IMR-90 (cell line): ENCODE measurements at regions of chr17 and their contacts with region 1.

Region 1: DNA sequence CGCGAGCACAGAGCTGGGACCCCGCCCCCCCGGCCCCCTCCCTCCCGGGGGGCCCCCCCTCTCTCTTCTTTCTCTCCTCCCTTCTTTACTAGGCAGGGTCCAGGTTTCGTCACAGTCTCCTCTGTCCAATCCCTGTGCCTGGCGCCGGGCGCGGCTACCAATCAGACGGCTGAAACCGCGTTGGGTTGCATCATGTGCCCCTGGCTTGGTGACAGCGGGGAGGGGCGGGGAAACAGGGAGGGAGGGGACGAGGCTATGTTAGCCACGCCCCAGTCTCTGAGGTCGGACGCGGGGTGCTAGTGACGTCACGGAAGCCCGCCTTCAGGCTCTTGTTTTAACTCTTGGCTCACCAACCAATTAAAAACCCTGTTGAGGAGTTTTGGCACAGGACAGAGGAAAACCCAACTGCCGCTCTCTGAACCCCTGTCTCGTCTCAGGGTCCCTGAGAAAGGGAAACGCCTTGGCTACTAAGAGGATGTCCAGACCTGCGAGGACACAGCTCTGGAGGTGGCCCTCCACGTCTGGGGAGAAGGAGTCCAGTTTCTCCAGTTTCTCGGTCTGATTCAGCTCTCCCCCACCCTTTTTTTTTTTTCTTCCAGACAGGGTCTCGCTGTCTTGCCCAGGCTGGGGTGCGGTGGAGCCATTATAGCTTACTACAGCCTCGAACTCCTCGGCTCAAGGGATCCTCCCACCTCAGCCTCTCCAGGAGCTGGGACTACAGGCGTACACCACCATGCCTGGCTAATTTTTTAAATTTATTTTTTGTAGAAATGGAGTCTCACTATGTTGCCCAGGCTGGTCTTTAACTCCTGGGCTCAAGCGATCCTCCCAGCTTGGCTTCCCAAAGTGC is 439 bp upstream of the PLEKHH3 start:
- DNase-seq: peak; percentile 99
- ATAC-seq: peak; percentile 72
- H3K4me3 ChIP-seq: peak overlapping the region; percentile 82
- H3K27ac ChIP-seq: peak overlapping the region; percentile 65
- H3K4me1 ChIP-seq: peaks cover 39% of the 10 kb centered on the region
- H3K27me3 ChIP-seq: no peaks in the 10 kb centered on the region
- CTCF ChIP-seq: no peak
- POLR2A ChIP-seq: no peak; the same call in 1 of the 2 replicates
- RAD21 ChIP-seq: no peak

Region 2: DNA sequence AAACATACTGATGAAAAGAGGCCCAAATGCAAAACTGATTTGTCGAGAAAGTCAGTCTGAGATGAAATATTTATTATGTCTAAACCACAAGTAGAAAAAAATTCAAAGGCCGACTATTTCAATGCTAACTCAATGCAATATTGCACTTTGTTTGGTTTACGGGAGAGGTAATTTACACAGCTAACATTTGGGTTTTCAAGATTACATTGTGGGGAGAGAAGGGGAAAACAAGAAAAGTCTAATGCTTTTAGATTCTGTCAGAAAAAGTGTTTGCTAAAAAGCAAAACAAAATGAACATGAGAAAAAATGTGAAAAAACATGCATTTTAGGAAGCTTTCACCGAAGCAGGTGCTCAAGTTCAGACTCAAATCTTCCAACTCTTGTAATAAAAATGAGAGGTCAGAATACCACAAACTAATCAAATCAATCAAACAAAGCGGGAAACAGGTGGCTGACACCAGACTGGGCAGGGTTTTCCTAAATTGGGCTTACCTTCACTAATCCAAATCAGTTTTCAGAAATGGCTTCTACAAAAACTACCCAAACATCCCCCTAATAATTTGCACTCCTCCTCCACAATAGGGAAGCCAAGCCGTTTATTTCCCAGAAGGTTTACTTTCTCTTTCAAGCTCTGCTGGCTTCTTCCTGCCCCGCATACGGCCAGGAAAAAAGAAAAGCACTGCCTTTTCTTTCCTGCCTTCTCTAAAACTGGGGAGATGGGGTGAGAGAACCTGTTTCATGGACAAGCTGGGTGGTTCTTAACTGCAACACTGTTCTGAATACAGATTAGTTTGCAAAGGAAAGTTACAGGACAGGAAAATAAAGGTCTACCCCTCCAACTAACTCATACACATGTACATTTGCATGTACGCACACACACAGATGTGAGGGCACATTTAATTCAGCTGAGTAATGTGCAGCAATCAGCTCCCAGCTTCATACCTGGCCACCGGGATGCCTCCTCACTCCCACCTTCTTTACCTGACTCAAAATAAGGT is 298.3 kb before region 1 on chr17:
- CTCF ChIA-PET with region 1: no interaction called
- POLR2A ChIA-PET with region 1: no interaction called
- dilution Hi-C with region 1: no loop called
- in situ Hi-C with region 1: no loop called
- intact Hi-C with region 1: no loop called
- DNase-seq: peak; percentile 34
- ATAC-seq: peak; percentile 74
- H3K4me3 ChIP-seq: peak overlapping the region; percentile 22; the same call in 1 of the 2 replicates
- H3K27ac ChIP-seq: no peak overlapping the region
- H3K4me1 ChIP-seq: peaks cover 4% of the 10 kb centered on the region; the same call in 1 of the 2 replicates
- H3K27me3 ChIP-seq: no peaks in the 10 kb centered on the region
- CTCF ChIP-seq: no peak
- POLR2A ChIP-seq: no peak
- RAD21 ChIP-seq: no peak

Region 3: GRCh38 chr17:42577532-42578281 is 99.5 kb before region 1 on chr17 and contains the start of gene PSMC3IP:
- CTCF ChIA-PET with region 1: interaction called, 15 read pairs
- POLR2A ChIA-PET with region 1: interaction called, 3 read pairs
- dilution Hi-C with region 1: no loop called
- in situ Hi-C with region 1: loop called (anchors 5 kb)
- intact Hi-C with region 1: loop called (anchors 1 kb)
- DNase-seq: peak; percentile 92
- ATAC-seq: peak; percentile 94
- H3K4me3 ChIP-seq: peak within 1 kb of the TSS; percentile 81
- H3K27ac ChIP-seq: peak within 1 kb of the TSS; percentile 96
- H3K4me1 ChIP-seq: peaks cover 5% of the 10 kb centered on the region
- H3K27me3 ChIP-seq: no peaks in the 10 kb centered on the region
- CTCF ChIP-seq: peak; percentile 56
- POLR2A ChIP-seq: no peak; the same call in 1 of the 2 replicates
- RAD21 ChIP-seq: 0 out of 2 replicates have a peak, but pooled peaks have one; percentile 24
- total RNA-seq, gene PSMC3IP: 5.6 and 8.9 TPM in 2 replicates

Region 4: GRCh38 chr17:42609182-42609813 is 67.9 kb before region 1 on chr17 and contains the starts of genes RETREG3 and TUBG1:
- CTCF ChIA-PET with region 1: interaction called, 3 read pairs
- POLR2A ChIA-PET with region 1: interaction called, 3 read pairs
- dilution Hi-C with region 1: no loop called
- in situ Hi-C with region 1: no loop called
- intact Hi-C with region 1: loop called (anchors 2 kb)
- DNase-seq: peak; percentile 99
- ATAC-seq: peak; percentile 93
- H3K4me3 ChIP-seq: peak within 1 kb of the TSS; percentile 75
- H3K27ac ChIP-seq: peak within 1 kb of the TSS; percentile 83
- H3K4me1 ChIP-seq: peaks cover 3% of the 10 kb centered on the region
- H3K27me3 ChIP-seq: no peaks in the 10 kb centered on the region
- CTCF ChIP-seq: peak; percentile 54
- POLR2A ChIP-seq: peak; percentile 78
- RAD21 ChIP-seq: peak; percentile 52
- total RNA-seq, gene RETREG3: 44.1 and 47.2 TPM in 2 replicates
- total RNA-seq, gene TUBG1: 38.9 and 42.5 TPM in 2 replicates

Region 5: GRCh38 chr17:43324205-43324893 is 647.1 kb after region 1 on chr17:
- CTCF ChIA-PET with region 1: no interaction called
- POLR2A ChIA-PET with region 1: no interaction called
- dilution Hi-C with region 1: no loop called
- in situ Hi-C with region 1: loop called (anchors 25 kb)
- intact Hi-C with region 1: no loop called
- DNase-seq: no peak
- ATAC-seq: no peak
- H3K4me3 ChIP-seq: no peak overlapping the region
- H3K27ac ChIP-seq: no peak overlapping the region
- H3K4me1 ChIP-seq: peaks cover 7% of the 10 kb centered on the region
- H3K27me3 ChIP-seq: no peaks in the 10 kb centered on the region
- CTCF ChIP-seq: 0 out of 2 replicates have a peak, but pooled peaks have one; percentile 6
- POLR2A ChIP-seq: no peak
- RAD21 ChIP-seq: no peak